Gastrocnemius medialis (tissue), 4 donors: ENCODE measurements at regions of chr7 and their contacts with region 1.

Region 1: GRCh38 chr7:25857376-25857921 is 294.5 kb upstream of the NFE2L3 start:
- DNase-seq: peak; percentile 73 to 86
- ATAC-seq: peak; percentile 43 to 48
- H3K4me3 ChIP-seq: peak overlapping the region; percentile 43 to 65 (median 58)
- H3K27ac ChIP-seq: peak overlapping the region; percentile 94 to 95 (median 94)
- H3K4me1 ChIP-seq: peaks cover 11 to 14% of the 10 kb centered on the region in 2 donors
- H3K27me3 ChIP-seq: peaks cover 0 to 12% (median 8%) of the 10 kb centered on the region in 3 donors
- CTCF ChIP-seq: no peak
- POLR2A ChIP-seq: no peak

Region 2: DNA sequence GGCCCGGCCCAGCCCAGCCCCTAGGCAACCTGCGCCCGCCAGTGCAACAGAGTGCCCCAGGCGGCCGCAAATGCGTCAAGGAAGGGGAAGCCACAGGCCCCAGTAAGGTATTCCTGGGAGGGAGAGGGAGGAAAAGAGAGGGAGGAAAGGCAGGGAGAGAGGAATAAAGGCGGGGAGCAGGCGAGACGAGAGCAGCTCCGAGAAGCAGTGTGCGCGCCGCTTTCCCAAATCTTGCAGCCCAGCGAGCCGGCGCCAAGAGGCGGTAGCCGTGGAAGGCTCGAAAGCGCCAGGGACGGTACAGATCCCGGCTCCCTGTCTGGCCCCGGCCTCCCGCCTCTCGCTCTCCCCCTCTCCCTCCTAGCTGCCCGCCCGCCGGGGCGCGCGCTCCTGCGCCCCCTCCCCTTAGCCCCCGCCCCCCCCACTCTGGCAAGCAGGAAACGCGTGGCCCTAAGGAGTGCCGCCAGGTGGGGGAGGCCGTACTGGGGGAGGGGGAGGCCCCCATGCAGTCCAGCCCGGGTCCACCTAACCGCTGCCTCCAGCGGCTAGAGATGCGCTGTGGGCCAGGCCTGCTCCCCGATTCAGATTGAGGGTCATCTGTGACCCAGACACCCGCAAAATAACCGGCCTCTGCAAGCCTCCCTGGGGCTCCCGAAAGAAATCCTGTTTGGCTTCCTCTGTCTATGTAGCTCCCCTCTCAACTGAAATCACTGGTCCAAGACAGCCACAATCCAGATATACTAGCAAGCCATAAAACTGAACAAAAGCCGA is 1312.4 kb after region 1 on chr7:
- in situ Hi-C with region 1: loop called in 3 of 4 experiments (anchors 5 to 10 kb)
- intact Hi-C with region 1: loop called (anchors 1 kb)
- DNase-seq: peak in 1 of 2 donors; percentile 25
- ATAC-seq: no peak
- H3K4me3 ChIP-seq: peak overlapping the region; percentile 62 to 88 (median 77)
- H3K27ac ChIP-seq: peak overlapping the region; percentile 90 to 99 (median 95)
- H3K4me1 ChIP-seq: peaks cover 3 to 46% of the 10 kb centered on the region in 2 donors
- H3K27me3 ChIP-seq: no peaks in the 10 kb centered on the region
- CTCF ChIP-seq: no peak
- POLR2A ChIP-seq: no peak